MCF 10A (cell line): ENCODE measurements at regions of chr11 and their contacts with region 1.

Region 1: GRCh38 chr11:106466521-106467080 is 389.1 kb downstream of the AASDHPPT start:
- DNase-seq: peak; percentile 28
- H3K4me3 Mint-ChIP-seq: no peak overlapping the region
- H3K27ac Mint-ChIP-seq: no peak overlapping the region
- H3K4me1 Mint-ChIP-seq: peaks cover 12% of the 10 kb centered on the region
- H3K27me3 Mint-ChIP-seq: no peaks in the 10 kb centered on the region
- CTCF ChIP-seq: no peak

Region 2: GRCh38 chr11:106670069-106670468 is 203.5 kb after region 1 on chr11:
- CTCF ChIA-PET with region 1: no interaction called
- POLR2A ChIA-PET with region 1: no interaction called
- intact Hi-C with region 1: no loop called
- DNase-seq: no peak
- H3K4me3 Mint-ChIP-seq: no peak overlapping the region
- H3K27ac Mint-ChIP-seq: no peak overlapping the region
- H3K4me1 Mint-ChIP-seq: peaks cover 8% of the 10 kb centered on the region
- H3K27me3 Mint-ChIP-seq: no peaks in the 10 kb centered on the region
- CTCF ChIP-seq: no peak

Region 3: DNA sequence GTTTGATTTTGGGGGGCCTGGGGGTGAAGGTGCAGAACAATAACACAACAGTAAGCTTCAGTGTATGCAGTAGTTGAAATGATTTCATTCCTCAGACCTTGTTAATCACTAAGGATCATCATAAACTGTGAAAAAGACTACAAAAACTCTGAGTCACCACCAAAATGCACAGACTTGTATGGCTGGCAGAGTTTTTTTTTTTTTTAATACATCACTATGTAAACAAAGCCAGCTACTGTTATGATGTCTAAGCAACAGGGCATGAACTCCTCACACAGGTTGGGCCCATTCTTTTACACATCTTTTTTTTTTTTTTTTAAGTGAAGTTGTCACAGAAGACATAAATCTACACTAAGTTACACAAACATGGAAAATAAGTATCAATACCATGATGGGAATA is 239.8 kb after region 1 on chr11:
- CTCF ChIA-PET with region 1: no interaction called
- POLR2A ChIA-PET with region 1: no interaction called
- intact Hi-C with region 1: loop called (anchors 10 kb)
- DNase-seq: peak; percentile 81
- H3K4me3 Mint-ChIP-seq: no peak overlapping the region
- H3K27ac Mint-ChIP-seq: peak overlapping the region; percentile 96
- H3K4me1 Mint-ChIP-seq: peaks cover 6% of the 10 kb centered on the region
- H3K27me3 Mint-ChIP-seq: no peaks in the 10 kb centered on the region
- CTCF ChIP-seq: no peak